Caco-2 (cell line): ENCODE measurements at regions of chr20 and their contacts with region 1.

Region 1: GRCh38 chr20:35092524-35093266 is at the start of gene TRPC4AP:
- DNase-seq: peak; percentile 94 to 99
- H3K4me3 ChIP-seq: peak within 1 kb of the TSS; percentile 79
- H3K4me3 Mint-ChIP-seq: peak within 1 kb of the TSS; percentile 86
- H3K27ac Mint-ChIP-seq: peak within 1 kb of the TSS; percentile 95
- H3K4me1 ChIP-seq: peaks cover 16% of the 10 kb centered on the region
- H3K4me1 Mint-ChIP-seq: peaks cover 20% of the 10 kb centered on the region
- H3K27me3 ChIP-seq: no peaks in the 10 kb centered on the region
- H3K27me3 Mint-ChIP-seq: no peaks in the 10 kb centered on the region
- CTCF ChIP-seq: peak; percentile 99 to 100
- total RNA-seq, gene TRPC4AP: 144 and 146 TPM in 2 replicates

Region 2: DNA sequence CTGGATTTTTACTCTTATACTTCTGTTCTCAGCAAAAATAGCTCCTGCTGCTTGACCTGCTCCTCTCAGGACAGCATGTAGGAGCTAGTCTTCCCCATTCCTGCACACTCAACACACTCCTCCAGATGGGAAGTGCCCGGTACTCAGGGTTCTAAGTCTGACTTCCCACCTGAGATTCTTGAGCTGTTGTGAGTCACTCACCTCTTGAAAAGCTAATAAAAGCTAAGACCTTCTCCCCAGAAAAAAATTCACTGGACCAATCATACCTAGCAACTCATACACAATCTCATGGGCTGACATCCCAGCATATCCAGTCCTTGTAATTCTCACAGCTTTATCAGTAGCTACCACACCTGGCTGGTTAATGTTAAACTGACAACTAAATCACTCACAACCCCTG is 53.5 kb before region 1 on chr20:
- CTCF ChIA-PET with region 1: interaction called, 18 read pairs
- POLR2A ChIA-PET with region 1: interaction called, 18 read pairs
- intact Hi-C with region 1: loop called (anchors 1 kb)
- DNase-seq: peak; percentile 89 to 95
- H3K4me3 ChIP-seq: no peak overlapping the region
- H3K4me3 Mint-ChIP-seq: peak overlapping the region; percentile 33
- H3K27ac Mint-ChIP-seq: peak overlapping the region; percentile 38
- H3K4me1 ChIP-seq: peaks cover 43% of the 10 kb centered on the region
- H3K4me1 Mint-ChIP-seq: peaks cover 46% of the 10 kb centered on the region
- H3K27me3 ChIP-seq: no peaks in the 10 kb centered on the region
- H3K27me3 Mint-ChIP-seq: no peaks in the 10 kb centered on the region
- CTCF ChIP-seq: no peak

Region 3: GRCh38 chr20:35111141-35111888 is 18.6 kb after region 1 on chr20:
- CTCF ChIA-PET with region 1: interaction called, 12 read pairs
- POLR2A ChIA-PET with region 1: no interaction called
- intact Hi-C with region 1: no loop called
- DNase-seq: no peak
- H3K4me3 ChIP-seq: no peak overlapping the region
- H3K4me3 Mint-ChIP-seq: no peak overlapping the region
- H3K27ac Mint-ChIP-seq: no peak overlapping the region
- H3K4me1 ChIP-seq: no peaks in the 10 kb centered on the region
- H3K4me1 Mint-ChIP-seq: no peaks in the 10 kb centered on the region
- H3K27me3 ChIP-seq: no peaks in the 10 kb centered on the region
- H3K27me3 Mint-ChIP-seq: no peaks in the 10 kb centered on the region
- CTCF ChIP-seq: no peak

Region 4: GRCh38 chr20:35129647-35130069 is 37.0 kb after region 1 on chr20:
- CTCF ChIA-PET with region 1: interaction called, 19 read pairs
- POLR2A ChIA-PET with region 1: no interaction called
- intact Hi-C with region 1: loop called (anchors 1 kb)
- DNase-seq: peak in 1 of 2 experiments; percentile 50
- H3K4me3 ChIP-seq: no peak overlapping the region
- H3K4me3 Mint-ChIP-seq: no peak overlapping the region
- H3K27ac Mint-ChIP-seq: no peak overlapping the region
- H3K4me1 ChIP-seq: peaks cover 8% of the 10 kb centered on the region; the same call in 1 of the 2 replicates
- H3K4me1 Mint-ChIP-seq: no peaks in the 10 kb centered on the region
- H3K27me3 ChIP-seq: no peaks in the 10 kb centered on the region
- H3K27me3 Mint-ChIP-seq: no peaks in the 10 kb centered on the region
- CTCF ChIP-seq: no peak

Region 5: GRCh38 chr20:35263532-35264223 is 171.0 kb after region 1 on chr20:
- CTCF ChIA-PET with region 1: interaction called, 49 read pairs
- POLR2A ChIA-PET with region 1: interaction called, 41 read pairs
- intact Hi-C with region 1: loop called (anchors 2 kb)
- DNase-seq: peak in 1 of 2 experiments; percentile 57
- H3K4me3 ChIP-seq: peak overlapping the region; percentile 13
- H3K4me3 Mint-ChIP-seq: peak overlapping the region; percentile 63
- H3K27ac Mint-ChIP-seq: peak overlapping the region; percentile 98
- H3K4me1 ChIP-seq: peaks cover 65% of the 10 kb centered on the region
- H3K4me1 Mint-ChIP-seq: peaks cover 48% of the 10 kb centered on the region
- H3K27me3 ChIP-seq: no peaks in the 10 kb centered on the region
- H3K27me3 Mint-ChIP-seq: no peaks in the 10 kb centered on the region
- CTCF ChIP-seq: no peak

Region 6: DNA sequence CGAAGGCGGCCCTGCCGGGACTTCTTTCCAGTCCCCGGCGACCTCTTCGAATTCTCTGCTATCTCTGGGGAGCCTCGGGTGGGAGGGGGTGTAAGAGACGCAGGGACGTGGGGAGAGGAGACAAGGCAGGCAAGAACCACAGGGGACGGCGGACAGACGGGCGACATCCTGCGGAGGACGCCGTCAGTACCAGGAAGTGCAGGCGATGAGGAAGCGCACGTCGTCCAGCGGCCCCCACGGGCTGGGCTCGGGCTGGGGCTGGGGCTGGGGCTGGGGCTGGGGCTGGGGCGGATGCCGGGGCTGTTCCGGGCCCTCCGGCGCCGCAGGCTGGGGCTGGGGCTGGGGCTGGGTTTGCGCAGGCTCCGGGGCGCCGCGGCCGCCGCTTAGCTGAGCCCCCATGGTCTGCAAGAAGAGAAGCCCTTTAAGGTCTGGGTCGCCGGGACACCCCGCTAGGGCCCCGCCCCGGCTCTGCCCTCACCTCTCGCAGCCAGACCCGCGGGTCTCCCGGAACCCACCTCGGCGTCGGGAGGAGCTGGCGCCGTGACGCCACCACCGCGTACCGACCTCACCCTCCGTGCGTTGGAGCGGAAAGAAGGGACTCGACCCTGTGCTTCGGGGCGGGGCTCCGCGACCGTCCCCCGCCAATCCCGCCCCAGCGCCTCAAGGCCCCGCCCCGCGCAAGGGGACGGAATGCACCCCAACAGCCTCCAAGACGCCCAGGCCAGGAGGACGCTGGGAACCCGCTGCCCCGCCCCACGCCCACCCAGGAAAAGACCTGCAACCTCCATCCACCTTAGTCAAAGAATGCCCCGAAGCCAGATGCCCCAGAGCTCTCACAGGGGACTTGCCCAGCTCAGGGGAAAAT is 185.1 kb after region 1 on chr20 and contains the start of gene MMP24OS:
- CTCF ChIA-PET with region 1: interaction called, 12 read pairs
- POLR2A ChIA-PET with region 1: no interaction called
- intact Hi-C with region 1: no loop called
- DNase-seq: peak; percentile 91
- H3K4me3 ChIP-seq: peak within 1 kb of the TSS; percentile 58
- H3K4me3 Mint-ChIP-seq: peak within 1 kb of the TSS; percentile 72
- H3K27ac Mint-ChIP-seq: peak within 1 kb of the TSS; percentile 74
- H3K4me1 ChIP-seq: peaks cover 4% of the 10 kb centered on the region; the same call in 1 of the 2 replicates
- H3K4me1 Mint-ChIP-seq: no peaks in the 10 kb centered on the region
- H3K27me3 ChIP-seq: no peaks in the 10 kb centered on the region
- H3K27me3 Mint-ChIP-seq: no peaks in the 10 kb centered on the region
- CTCF ChIP-seq: peak; percentile 11 to 48
- total RNA-seq, gene MMP24OS: 38.8 and 42.3 TPM in 2 replicates

Region 7: DNA sequence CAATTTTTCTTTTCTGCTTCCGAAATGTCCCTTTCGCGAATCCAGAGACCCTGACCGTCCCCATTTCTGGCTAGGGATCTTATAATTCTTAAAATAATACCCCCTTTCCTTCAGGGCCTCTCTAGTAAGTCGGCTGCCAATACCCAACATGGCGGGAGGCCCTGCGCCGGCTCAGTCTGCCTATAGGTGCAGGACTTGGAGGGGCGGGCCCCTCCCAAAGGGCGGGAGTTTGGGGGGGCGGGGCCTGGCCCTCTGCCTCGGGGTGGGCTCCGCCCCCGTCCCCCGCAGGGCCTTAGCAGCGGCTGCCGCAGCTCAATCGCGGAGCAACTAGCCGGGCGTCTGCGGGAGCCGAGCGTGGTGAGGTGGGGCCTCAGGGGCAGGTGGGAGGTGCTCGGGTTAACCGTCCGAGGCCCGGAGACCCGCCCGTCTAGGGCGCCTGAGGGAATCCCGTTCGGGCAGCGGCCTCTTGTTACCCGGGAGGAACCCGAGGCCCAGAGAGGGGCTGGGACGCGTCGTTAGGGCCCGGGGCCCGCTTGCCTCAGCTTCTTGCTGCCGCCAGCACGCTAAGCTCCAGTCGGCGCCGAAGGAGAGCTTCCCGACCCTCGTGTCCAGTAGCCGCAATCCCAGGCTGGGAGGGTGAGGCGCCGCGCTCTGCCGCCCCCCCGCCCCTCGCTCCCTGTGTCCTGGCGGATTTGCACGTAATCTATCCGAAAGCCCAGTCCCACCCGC is 362.4 kb after region 1 on chr20 and contains the start of gene CEP250:
- CTCF ChIA-PET with region 1: no interaction called
- POLR2A ChIA-PET with region 1: interaction called, 18 read pairs
- intact Hi-C with region 1: no loop called
- DNase-seq: peak; percentile 100
- H3K4me3 ChIP-seq: peak within 1 kb of the TSS; percentile 50
- H3K4me3 Mint-ChIP-seq: peak within 1 kb of the TSS; percentile 93
- H3K27ac Mint-ChIP-seq: peak within 1 kb of the TSS; percentile 100
- H3K4me1 ChIP-seq: peaks cover 5% of the 10 kb centered on the region
- H3K4me1 Mint-ChIP-seq: peaks cover 29% of the 10 kb centered on the region
- H3K27me3 ChIP-seq: no peaks in the 10 kb centered on the region
- H3K27me3 Mint-ChIP-seq: no peaks in the 10 kb centered on the region
- CTCF ChIP-seq: no peak
- total RNA-seq, gene CEP250: 117 and 137 TPM in 2 replicates